Motor neuron (in vitro differentiated cells): ENCODE measurements at regions of chr16 and their contacts with region 1.

Region 1: DNA sequence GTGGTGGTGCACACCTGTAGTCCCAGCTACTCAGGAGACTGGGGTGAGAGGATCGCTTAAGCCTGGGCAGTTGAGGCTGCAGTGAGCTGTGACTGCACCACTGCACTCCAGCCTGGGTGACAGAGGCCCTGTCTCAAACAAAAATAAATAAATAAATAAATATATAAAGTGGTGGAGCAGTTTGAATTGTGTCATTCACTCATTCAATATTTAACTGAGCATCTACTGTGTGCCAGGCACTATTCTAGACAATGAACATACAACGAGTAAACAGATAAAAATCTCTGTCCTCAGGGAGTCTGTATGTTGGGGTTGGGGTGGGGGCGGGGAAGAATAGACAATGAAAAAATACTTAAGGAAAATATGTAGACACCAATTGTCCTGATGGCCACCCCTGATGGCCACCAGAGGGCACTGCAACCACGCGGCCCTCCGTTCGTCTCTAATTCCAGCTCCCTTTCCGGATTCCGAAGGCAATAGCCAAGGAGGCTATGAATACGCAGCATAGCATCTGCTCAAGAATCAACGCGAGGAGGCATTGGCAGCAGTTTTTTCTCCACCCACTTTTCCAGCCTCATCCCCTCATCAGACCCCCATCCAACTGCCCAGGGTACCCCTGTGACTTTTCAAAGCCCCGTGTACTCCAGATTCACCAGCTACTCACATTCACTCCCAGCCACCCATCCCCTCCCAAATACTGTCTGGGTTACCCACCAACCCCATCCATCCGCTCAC is 21.4 kb downstream of the QPRT start:
- ATAC-seq: peak in 3 of 8 experiments; percentile 86 to 92 (median 91)
- H3K4me3 ChIP-seq: no peak overlapping the region
- H3K27ac ChIP-seq: no peak overlapping the region
- H3K4me1 ChIP-seq: peaks cover 12 to 14% of the 10 kb centered on the region in 2 donors

Region 2: DNA sequence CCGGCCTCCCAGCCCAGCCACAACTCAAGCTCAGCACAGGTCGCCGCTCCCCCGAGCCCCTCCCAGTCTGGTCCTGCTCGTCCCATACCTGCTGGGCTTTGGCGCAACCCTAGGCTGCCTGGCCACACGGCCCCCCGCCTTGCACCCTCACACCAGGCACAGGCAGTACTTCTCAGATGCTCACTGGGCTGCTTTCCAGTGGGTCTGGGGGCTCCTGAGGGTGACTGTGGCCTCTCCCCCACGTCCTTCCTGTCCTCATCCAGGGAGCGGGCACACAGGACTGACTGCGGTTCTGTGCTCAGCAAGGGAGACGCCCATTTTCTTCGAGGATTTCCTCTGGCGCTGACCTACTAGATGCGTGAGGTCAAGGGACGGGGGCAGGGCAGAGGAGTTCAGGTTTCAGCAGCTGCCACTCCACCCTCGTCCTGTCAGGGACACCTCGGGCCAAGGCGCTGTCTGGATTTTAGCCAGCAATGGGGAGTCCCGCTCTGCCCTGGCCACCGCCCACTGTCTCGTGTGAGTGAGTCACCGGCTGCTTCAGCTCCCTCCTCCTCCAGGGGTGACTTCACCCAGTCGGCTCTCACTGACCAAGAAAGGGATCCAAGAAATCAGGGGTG is 409.7 kb before region 1 on chr16:
- in situ Hi-C with region 1: no loop called
- ATAC-seq: peak; percentile 86 to 97 (median 94)
- H3K4me3 ChIP-seq: no peak overlapping the region
- H3K27ac ChIP-seq: no peak overlapping the region
- H3K4me1 ChIP-seq: peaks cover 0 to 5% of the 10 kb centered on the region in 2 donors

Region 3: GRCh38 chr16:29757950-29758466 is 57.6 kb after region 1 on chr16:
- in situ Hi-C with region 1: no loop called
- ATAC-seq: peak in 7 of 8 experiments; percentile 45 to 92 (median 84)
- H3K4me3 ChIP-seq: no peak overlapping the region
- H3K27ac ChIP-seq: peak overlapping the region in 1 of 2 donors; percentile 64
- H3K4me1 ChIP-seq: peaks cover 3 to 6% of the 10 kb centered on the region in 2 donors

Region 4: GRCh38 chr16:29805378-29806098 is 105.1 kb after region 1 on chr16:
- in situ Hi-C with region 1: loop called in 1 of 9 experiments (anchors 10 kb)
- ATAC-seq: peak; percentile 55 to 83 (median 74)
- H3K4me3 ChIP-seq: peak overlapping the region; percentile 57 to 92 (median 80)
- H3K27ac ChIP-seq: peak overlapping the region; percentile 97 to 99
- H3K4me1 ChIP-seq: peaks cover 32 to 33% of the 10 kb centered on the region in 2 donors

Region 5: DNA sequence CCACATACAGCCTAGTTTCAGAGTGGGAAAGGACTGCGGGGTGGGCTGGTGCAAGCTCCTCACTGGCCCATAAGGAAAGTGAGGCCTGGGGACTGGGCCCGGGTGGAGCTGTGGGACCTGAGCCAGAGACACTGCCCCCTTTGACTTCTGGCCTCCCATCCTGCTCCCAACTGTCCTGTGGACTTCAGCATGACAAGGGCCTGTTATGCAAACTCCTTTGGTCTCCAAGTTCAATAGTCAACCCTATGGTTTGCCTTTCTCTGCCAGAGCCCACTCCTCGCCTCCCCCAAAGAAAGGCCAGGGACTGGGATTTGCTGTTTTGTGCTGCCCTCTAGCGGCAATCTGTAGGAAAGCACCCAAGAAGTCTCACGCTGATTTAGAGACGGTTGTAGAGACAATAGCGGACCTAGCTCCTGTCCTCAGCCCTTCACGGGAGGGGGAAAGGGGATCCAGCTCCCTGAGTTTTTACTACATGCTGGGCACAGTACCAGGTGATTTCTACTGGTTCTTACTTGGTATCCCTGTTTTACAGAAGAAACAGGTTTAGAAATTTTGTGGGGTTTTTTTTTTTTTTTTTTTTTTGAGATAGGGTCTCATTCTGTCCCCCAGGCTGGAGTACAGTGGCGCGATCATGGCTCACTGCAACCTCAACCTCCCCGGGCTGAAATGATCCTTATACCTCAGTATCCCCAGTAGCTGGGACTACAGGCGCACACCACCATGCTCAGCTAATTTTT is 331.8 kb after region 1 on chr16:
- in situ Hi-C with region 1: loop called in 1 of 9 experiments (anchors 25 kb)
- ATAC-seq: peak; percentile 29 to 69 (median 44)
- H3K4me3 ChIP-seq: peak overlapping the region in 3 of 5 donors; percentile 1 to 46 (median 1)
- H3K27ac ChIP-seq: no peak overlapping the region
- H3K4me1 ChIP-seq: peaks cover 22 to 34% of the 10 kb centered on the region in 2 donors